MCF 10A (cell line): ENCODE measurements at regions of chr2 and their contacts with region 1.

Region 1: DNA sequence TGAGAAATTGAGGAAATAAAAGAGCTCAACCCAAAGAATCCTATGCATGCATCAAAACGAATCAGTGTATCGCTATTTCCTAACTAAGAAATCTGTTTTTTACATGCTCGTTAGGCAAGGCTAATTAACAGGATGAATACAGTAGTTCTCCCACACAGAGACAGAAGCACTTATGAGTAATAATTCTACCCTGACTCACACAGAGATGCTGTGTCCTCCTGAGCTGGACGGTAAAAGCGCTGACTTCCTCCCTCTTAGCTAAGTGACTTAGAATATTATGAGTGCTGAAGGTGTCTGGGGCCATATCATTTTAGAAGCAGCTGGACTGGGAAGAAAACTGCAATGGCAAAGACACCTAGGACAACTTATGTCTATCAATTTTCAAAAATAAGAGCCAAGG is 18.5 kb downstream of the PLEKHM3 start:
- DNase-seq: peak; percentile 35
- H3K4me3 Mint-ChIP-seq: no peak overlapping the region
- H3K27ac Mint-ChIP-seq: no peak overlapping the region
- H3K4me1 Mint-ChIP-seq: peaks cover 16% of the 10 kb centered on the region
- H3K27me3 Mint-ChIP-seq: no peaks in the 10 kb centered on the region
- CTCF ChIP-seq: no peak

Region 2: DNA sequence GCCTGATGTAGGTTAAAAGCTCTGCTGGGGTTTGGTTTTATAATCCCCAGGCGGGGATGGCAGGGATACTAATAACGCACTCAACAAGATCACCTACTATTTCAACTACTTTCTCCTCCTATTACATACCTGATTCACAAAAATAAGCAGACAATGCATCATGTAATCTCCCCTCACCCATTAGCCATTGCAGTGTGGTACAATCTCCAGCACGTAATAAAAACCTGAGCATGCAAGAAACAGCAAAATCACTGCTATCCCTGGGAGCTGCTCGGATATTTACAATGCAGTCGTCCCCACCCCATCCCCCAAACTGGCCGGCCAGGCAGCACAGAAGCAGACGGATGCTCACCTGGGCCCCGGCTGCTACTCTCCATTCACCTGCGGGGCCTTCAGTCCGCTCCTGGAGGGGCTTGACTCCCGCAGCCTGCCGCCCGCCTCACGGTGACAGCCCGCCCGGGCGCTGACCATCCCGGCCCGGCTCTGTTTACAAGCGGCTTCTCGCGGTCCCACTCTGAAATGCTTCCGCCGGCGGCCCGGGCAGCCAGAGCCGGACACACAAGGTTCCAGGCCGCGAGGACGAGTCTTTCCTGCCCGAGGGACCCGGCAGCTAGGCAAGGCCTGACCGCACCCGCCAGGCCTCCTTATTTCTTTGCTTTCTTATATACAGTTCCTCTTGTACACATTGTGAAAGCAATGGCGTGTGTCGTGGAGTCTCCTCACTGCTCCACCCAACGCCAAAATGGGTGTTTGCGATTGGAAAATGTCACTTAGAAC is 18.4 kb after region 1 on chr2 and contains the start of gene PLEKHM3:
- CTCF ChIA-PET with region 1: no interaction called
- POLR2A ChIA-PET with region 1: interaction called, 35 read pairs
- intact Hi-C with region 1: no loop called
- DNase-seq: peak; percentile 84
- H3K4me3 Mint-ChIP-seq: peak within 1 kb of the TSS; percentile 78
- H3K27ac Mint-ChIP-seq: peak within 1 kb of the TSS; percentile 87
- H3K4me1 Mint-ChIP-seq: no peaks in the 10 kb centered on the region
- H3K27me3 Mint-ChIP-seq: no peaks in the 10 kb centered on the region
- CTCF ChIP-seq: no peak
- total RNA-seq, gene PLEKHM3: 5.4 and 7.5 TPM in 2 replicates